Mammary epithelial cell (primary cell): ENCODE measurements at regions of chr2 and their contacts with region 1.

Region 1: GRCh38 chr2:178193823-178194599 is at the start of gene OSBPL6:
- DNase-seq: peak; percentile 91
- H3K4me3 ChIP-seq: peak within 1 kb of the TSS; percentile 78 to 87 (median 79)
- H3K27ac ChIP-seq: peak within 1 kb of the TSS; percentile 68
- H3K4me1 ChIP-seq: peaks cover 26% of the 10 kb centered on the region
- H3K27me3 ChIP-seq: no peaks in the 10 kb centered on the region
- CTCF ChIP-seq: peak in 1 of 2 donors; percentile 11
- total RNA-seq, gene OSBPL6: 32.2 to 32.9 TPM

Region 2: GRCh38 chr2:178128836-178129630 is 65.0 kb before region 1 on chr2:
- CTCF ChIA-PET with region 1: no interaction called
- dilution Hi-C with region 1: no loop called
- in situ Hi-C with region 1: no loop called
- intact Hi-C with region 1: loop called (anchors 2 kb)
- DNase-seq: no peak
- H3K4me3 ChIP-seq: no peak overlapping the region
- H3K27ac ChIP-seq: no peak overlapping the region
- H3K4me1 ChIP-seq: no peaks in the 10 kb centered on the region
- H3K27me3 ChIP-seq: no peaks in the 10 kb centered on the region
- CTCF ChIP-seq: no peak

Region 3: GRCh38 chr2:178298785-178299212 is 104.8 kb after region 1 on chr2:
- CTCF ChIA-PET with region 1: no interaction called
- dilution Hi-C with region 1: no loop called
- in situ Hi-C with region 1: no loop called
- intact Hi-C with region 1: loop called (anchors 5 kb)
- DNase-seq: peak; percentile 89
- H3K4me3 ChIP-seq: no peak overlapping the region
- H3K27ac ChIP-seq: peak overlapping the region; percentile 67
- H3K4me1 ChIP-seq: peaks cover 15% of the 10 kb centered on the region
- H3K27me3 ChIP-seq: no peaks in the 10 kb centered on the region
- CTCF ChIP-seq: no peak

Region 4: GRCh38 chr2:178484245-178485041 is 290.4 kb after region 1 on chr2:
- CTCF ChIA-PET with region 1: no interaction called
- dilution Hi-C with region 1: no loop called
- in situ Hi-C with region 1: no loop called
- intact Hi-C with region 1: no loop called
- DNase-seq: no peak
- H3K4me3 ChIP-seq: no peak overlapping the region
- H3K27ac ChIP-seq: no peak overlapping the region
- H3K4me1 ChIP-seq: peaks cover 13% of the 10 kb centered on the region
- H3K27me3 ChIP-seq: no peaks in the 10 kb centered on the region
- CTCF ChIP-seq: no peak

Region 5: DNA sequence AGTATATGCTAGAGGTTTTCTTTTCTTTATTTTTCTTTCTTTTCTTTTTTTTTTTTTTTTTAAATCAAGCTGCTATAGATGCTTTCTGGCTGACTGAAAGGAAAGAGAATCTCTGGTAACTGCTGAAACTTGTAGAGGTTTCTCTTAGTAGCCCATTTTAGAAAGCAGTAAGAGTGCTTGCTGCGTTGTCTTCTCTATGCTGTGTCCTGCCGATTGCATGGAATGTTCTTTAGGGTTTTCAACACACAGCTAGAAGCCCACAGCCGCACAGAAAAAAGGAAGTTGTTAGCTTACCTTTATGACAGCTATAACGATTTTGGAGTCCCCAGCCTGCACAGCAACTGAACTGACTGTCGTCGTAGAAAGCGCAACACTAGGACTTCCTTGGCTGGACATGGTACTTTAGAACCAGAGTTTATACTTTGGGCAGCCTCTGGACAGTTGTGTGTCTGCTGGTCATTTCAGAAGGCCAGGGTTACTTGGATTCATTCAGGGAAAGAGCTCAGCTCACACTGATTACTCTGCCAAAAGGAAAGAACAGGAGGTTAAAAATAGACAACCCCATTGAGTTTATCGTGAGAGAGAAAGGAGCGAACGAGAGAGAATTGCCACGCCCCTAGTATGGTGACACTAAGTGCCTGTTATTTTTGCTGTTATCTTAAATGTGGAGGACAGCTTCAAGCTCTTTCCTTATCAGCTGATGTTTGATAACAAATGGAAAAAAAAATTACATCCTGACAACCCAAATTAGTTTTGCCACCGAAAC is 855.7 kb after region 1 on chr2 and contains the start of gene CCDC141:
- CTCF ChIA-PET with region 1: no interaction called
- dilution Hi-C with region 1: no loop called
- in situ Hi-C with region 1: no loop called
- intact Hi-C with region 1: no loop called
- DNase-seq: no peak
- H3K4me3 ChIP-seq: no peak within 1 kb of the TSS
- H3K27ac ChIP-seq: no peak within 1 kb of the TSS
- H3K4me1 ChIP-seq: no peaks in the 10 kb centered on the region
- H3K27me3 ChIP-seq: no peaks in the 10 kb centered on the region
- CTCF ChIP-seq: no peak
- total RNA-seq, gene CCDC141: not detected